ENCODE measurements at regions of chr18 and their contacts with region 1.

Region 1: GRCh38 chr18:48049757-48050156 is 119.3 kb upstream of the SMAD2 start:
- DNase-seq: no peak
- ATAC-seq: no peak
- H3K4me3 ChIP-seq: no peak overlapping the region
- H3K27ac ChIP-seq: no peak overlapping the region
- H3K4me1 ChIP-seq: peaks cover 0 to 9% (median 0%) of the 10 kb centered on the region in 12 donors
- H3K27me3 ChIP-seq: no peaks in the 10 kb centered on the region
- CTCF ChIP-seq: no peak
- POLR2A ChIP-seq: no peak

Region 2: GRCh38 chr18:47846431-47846830 is 203.3 kb before region 1 on chr18:
- intact Hi-C with region 1: no loop called
- DNase-seq: no peak
- ATAC-seq: no peak
- H3K4me3 ChIP-seq: no peak overlapping the region
- H3K27ac ChIP-seq: no peak overlapping the region
- H3K4me1 ChIP-seq: no peaks in the 10 kb centered on the region
- H3K27me3 ChIP-seq: no peaks in the 10 kb centered on the region
- CTCF ChIP-seq: no peak
- POLR2A ChIP-seq: no peak

Region 3: DNA sequence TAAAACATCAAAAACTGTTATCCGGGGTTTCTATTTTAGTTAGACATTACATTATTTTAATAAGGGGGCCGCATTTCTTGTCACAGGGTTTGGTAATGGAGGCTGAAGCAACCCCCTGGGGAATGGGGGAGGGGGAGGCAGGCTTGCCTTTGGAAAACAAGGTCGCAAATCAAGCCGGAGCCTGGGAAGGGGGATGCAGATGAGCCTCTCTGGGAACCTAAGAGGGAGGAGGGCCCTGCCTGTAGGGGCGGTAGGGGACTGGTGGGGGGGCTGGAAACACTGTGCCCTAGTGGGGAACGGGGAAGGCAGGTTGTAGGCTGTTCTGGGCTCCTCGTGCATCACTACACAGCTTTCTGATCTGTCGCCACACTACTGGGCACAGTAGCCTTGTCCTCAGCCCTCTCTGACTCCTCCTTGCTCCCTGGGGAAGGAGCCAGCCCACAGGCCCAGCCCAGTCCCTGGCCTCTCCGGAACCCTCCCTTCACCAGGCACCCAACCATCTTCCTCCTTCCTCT is 51.0 kb after region 1 on chr18:
- intact Hi-C with region 1: loop called in 2 of 10 experiments (anchors 5 to 10 kb)
- DNase-seq: no peak
- ATAC-seq: peak in 1 of 4 donors; percentile 13
- H3K4me3 ChIP-seq: no peak overlapping the region
- H3K27ac ChIP-seq: no peak overlapping the region
- H3K4me1 ChIP-seq: peaks cover 0 to 2% (median 0%) of the 10 kb centered on the region in 12 donors
- H3K27me3 ChIP-seq: no peaks in the 10 kb centered on the region
- CTCF ChIP-seq: no peak
- POLR2A ChIP-seq: no peak

Region 4: GRCh38 chr18:48153641-48154481 is 104.1 kb after region 1 on chr18:
- intact Hi-C with region 1: no loop called
- DNase-seq: no peak
- ATAC-seq: peak in 3 of 4 donors; percentile 27 to 70 (median 47)
- H3K4me3 ChIP-seq: no peak overlapping the region
- H3K27ac ChIP-seq: no peak overlapping the region
- H3K4me1 ChIP-seq: peaks cover 0 to 13% (median 3%) of the 10 kb centered on the region in 12 donors
- H3K27me3 ChIP-seq: no peaks in the 10 kb centered on the region
- CTCF ChIP-seq: no peak
- POLR2A ChIP-seq: no peak

Region 5: DNA sequence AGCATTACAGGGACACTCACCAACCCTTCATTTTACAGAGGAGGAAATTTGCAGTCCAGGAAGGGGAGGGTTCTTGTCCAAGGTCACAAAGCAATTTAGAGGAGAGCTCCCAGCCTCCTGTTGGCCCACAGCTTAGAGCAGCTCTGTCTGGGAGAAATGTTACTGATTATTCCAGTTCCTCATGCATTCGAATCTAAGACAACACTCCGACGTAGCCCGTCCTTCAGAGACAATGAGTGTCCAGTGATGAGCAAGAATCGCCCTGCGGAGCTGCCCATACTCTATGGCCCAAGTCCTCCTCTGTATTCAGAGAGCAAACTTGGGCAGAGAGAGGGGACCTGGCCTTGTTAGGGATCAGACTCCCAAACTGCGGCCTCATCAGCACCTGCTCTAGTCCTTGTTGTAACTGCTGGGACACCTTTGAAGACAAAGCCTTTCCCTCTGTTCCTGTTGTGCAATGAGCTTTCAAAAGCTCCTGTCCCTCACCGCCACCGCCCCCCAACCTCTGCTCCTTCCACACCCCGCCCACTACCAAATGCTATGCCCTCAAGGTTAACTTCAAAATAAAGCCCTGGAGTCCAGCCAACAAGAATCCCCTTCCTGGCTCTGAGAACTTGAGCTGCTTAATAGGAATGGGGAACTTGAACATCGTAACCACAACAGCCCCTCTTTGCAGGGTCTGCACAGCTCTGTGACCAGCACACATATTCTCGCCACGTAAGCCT is 115.5 kb after region 1 on chr18:
- intact Hi-C with region 1: no loop called
- DNase-seq: no peak
- ATAC-seq: no peak
- H3K4me3 ChIP-seq: no peak overlapping the region
- H3K27ac ChIP-seq: peak overlapping the region in 3 of 12 donors; percentile 17 to 46 (median 30)
- H3K4me1 ChIP-seq: peaks cover 2 to 59% (median 39%) of the 10 kb centered on the region in 12 donors
- H3K27me3 ChIP-seq: no peaks in the 10 kb centered on the region
- CTCF ChIP-seq: no peak
- POLR2A ChIP-seq: no peak

Measured in heart left ventricle (tissue), 16 donors.